ENCODE measurements at regions of chr3 and their contacts with region 1.

Region 1: DNA sequence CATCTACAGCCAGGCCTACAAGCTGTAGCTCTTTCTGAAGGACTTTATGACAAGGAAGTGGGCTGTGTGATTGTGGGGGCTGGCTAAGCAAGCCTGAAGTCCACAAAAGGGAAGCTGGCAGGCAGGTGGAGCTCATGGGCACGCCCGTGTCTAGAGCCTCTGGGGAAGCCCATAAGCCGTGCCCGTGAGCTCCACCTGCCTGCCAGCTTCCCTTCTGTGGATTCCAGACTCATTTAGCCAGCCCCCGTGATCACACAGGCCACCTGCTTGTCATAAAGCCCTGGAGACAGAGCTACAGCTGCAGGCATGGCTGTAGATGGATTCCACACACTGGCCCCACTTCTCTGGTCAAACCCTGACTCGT is 15.2 kb downstream of the EFCC1 start:
- DNase-seq: peak in 8 of 9 experiments; percentile 48 to 91 (median 74)
- ATAC-seq: peak; percentile 86
- H3K4me3 ChIP-seq: peak overlapping the region; percentile 40 to 41
- H3K4me3 Mint-ChIP-seq: peak overlapping the region; percentile 73
- H3K27ac ChIP-seq: peak overlapping the region; percentile 49 to 87
- H3K27ac Mint-ChIP-seq: peak overlapping the region; percentile 92
- H3K4me1 ChIP-seq: peaks cover 41% of the 10 kb centered on the region
- H3K4me1 Mint-ChIP-seq: peaks cover 44% of the 10 kb centered on the region
- H3K27me3 ChIP-seq: no peaks in the 10 kb centered on the region
- H3K27me3 Mint-ChIP-seq: no peaks in the 10 kb centered on the region
- CTCF ChIP-seq: peak; percentile 38

Region 2: GRCh38 chr3:129003578-129004160 is 12.7 kb before region 1 on chr3:
- CTCF ChIA-PET with region 1: interaction called, 117 read pairs
- POLR2A ChIA-PET with region 1: interaction called, 47 read pairs
- intact Hi-C with region 1: loop called (anchors 1 kb)
- DNase-seq: peak in 8 of 9 experiments; percentile 38 to 82 (median 60)
- ATAC-seq: peak; percentile 92
- H3K4me3 ChIP-seq: peak overlapping the region in 1 of 2 experiments; percentile 12
- H3K4me3 Mint-ChIP-seq: peak overlapping the region; percentile 70
- H3K27ac ChIP-seq: no peak overlapping the region
- H3K27ac Mint-ChIP-seq: no peak overlapping the region
- H3K4me1 ChIP-seq: peaks cover 43% of the 10 kb centered on the region
- H3K4me1 Mint-ChIP-seq: peaks cover 43% of the 10 kb centered on the region
- H3K27me3 ChIP-seq: peaks cover 5 to 23% of the 10 kb centered on the region in 2 experiments
- H3K27me3 Mint-ChIP-seq: peaks cover 21% of the 10 kb centered on the region
- CTCF ChIP-seq: peak; percentile 34

Region 3: DNA sequence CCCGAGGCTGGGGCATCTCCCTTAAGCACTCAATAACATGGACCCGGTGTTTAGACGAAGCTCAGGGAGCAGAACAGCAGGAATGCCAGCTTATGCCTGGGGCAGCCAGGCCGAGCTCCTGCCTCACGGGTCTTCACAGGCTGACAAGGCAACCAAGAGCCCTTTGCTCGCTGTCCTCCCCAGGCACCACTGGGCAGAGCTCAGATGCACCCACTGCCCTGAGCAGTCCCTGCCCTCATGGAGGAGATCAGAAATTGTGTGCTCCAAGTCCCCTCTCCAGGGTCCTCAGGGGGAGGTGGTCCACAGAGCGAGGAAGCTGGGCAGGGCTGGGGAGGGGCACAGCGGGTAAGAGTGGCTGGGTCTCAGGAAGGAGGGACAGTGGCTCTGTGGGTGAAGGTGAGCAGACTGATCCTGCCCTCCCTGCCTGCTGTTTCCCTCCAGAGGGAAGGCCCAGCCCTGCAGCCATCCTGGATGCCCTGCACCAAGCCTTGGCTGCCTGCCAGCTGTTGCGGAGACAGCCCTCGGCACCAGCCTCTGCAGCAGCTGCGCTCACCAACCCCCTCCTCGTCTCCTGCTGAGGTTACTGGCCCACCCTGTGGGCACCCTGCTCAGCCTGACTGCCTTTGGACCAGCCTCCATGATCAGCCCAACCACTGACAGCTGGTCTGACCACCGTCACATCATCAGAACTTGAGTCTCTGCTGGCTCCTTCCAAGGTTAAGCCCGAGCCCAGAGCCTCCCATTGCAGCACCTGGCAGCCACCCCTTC is 23.1 kb after region 1 on chr3:
- CTCF ChIA-PET with region 1: interaction called, 18 read pairs
- POLR2A ChIA-PET with region 1: interaction called, 3 read pairs
- intact Hi-C with region 1: no loop called
- DNase-seq: peak in 1 of 9 experiments; percentile 45
- ATAC-seq: no peak
- H3K4me3 ChIP-seq: no peak overlapping the region
- H3K4me3 Mint-ChIP-seq: no peak overlapping the region
- H3K27ac ChIP-seq: no peak overlapping the region
- H3K27ac Mint-ChIP-seq: no peak overlapping the region
- H3K4me1 ChIP-seq: peaks cover 23% of the 10 kb centered on the region
- H3K4me1 Mint-ChIP-seq: peaks cover 21% of the 10 kb centered on the region
- H3K27me3 ChIP-seq: peaks cover 0 to 4% of the 10 kb centered on the region in 2 experiments
- H3K27me3 Mint-ChIP-seq: peaks cover 13% of the 10 kb centered on the region
- CTCF ChIP-seq: no peak

Region 4: DNA sequence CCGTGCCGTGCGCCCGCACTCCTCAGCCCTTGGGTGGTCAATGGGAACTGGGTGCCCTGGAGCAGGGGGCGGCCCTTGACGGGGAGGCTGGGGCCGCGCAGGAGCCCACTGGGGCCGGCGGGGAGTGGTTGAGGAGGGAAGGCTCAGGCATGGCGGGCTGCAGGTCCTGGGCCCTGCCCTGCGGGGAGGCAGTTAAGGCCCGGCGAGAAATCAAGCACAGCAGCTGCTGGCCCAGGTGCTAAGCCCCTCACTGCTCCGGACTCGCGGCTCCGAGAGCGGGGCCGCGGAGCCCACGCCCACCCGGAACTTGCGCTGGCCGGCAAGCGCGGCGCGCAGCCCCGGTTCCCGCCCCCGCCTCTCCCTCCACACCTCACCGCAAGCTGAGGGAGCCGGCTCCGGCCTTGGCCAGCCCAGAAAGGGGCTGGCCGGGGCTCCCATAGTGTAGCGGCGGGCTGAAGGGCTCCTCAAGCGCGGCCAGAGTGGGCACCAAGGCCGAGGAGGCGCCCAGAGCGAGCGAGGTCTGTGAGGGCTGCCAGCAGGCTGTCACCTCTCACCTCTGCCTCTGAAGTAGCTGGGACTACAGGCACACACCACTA is 52.1 kb after region 1 on chr3:
- CTCF ChIA-PET with region 1: no interaction called
- POLR2A ChIA-PET with region 1: interaction called, 4 read pairs
- intact Hi-C with region 1: loop called in 1 of 2 experiments (anchors 5 kb)
- DNase-seq: peak in 3 of 9 experiments; percentile 25 to 55 (median 38)
- ATAC-seq: peak; percentile 53
- H3K4me3 ChIP-seq: peak overlapping the region; percentile 33 to 37
- H3K4me3 Mint-ChIP-seq: peak overlapping the region; percentile 82
- H3K27ac ChIP-seq: no peak overlapping the region
- H3K27ac Mint-ChIP-seq: no peak overlapping the region
- H3K4me1 ChIP-seq: no peaks in the 10 kb centered on the region
- H3K4me1 Mint-ChIP-seq: peaks cover 28% of the 10 kb centered on the region
- H3K27me3 ChIP-seq: no peaks in the 10 kb centered on the region
- H3K27me3 Mint-ChIP-seq: peaks cover 3% of the 10 kb centered on the region
- CTCF ChIP-seq: no peak

Region 5: GRCh38 chr3:129197321-129197720 is 181.0 kb after region 1 on chr3:
- CTCF ChIA-PET with region 1: no interaction called
- POLR2A ChIA-PET with region 1: no interaction called
- intact Hi-C with region 1: no loop called
- DNase-seq: no peak
- ATAC-seq: no peak
- H3K4me3 ChIP-seq: no peak overlapping the region
- H3K4me3 Mint-ChIP-seq: no peak overlapping the region
- H3K27ac ChIP-seq: no peak overlapping the region
- H3K27ac Mint-ChIP-seq: no peak overlapping the region
- H3K4me1 ChIP-seq: no peaks in the 10 kb centered on the region
- H3K4me1 Mint-ChIP-seq: no peaks in the 10 kb centered on the region
- H3K27me3 ChIP-seq: no peaks in the 10 kb centered on the region
- H3K27me3 Mint-ChIP-seq: no peaks in the 10 kb centered on the region
- CTCF ChIP-seq: no peak

Region 6: GRCh38 chr3:129291236-129291886 is 275.0 kb after region 1 on chr3:
- CTCF ChIA-PET with region 1: no interaction called
- POLR2A ChIA-PET with region 1: no interaction called
- intact Hi-C with region 1: no loop called
- DNase-seq: no peak
- ATAC-seq: no peak
- H3K4me3 ChIP-seq: no peak overlapping the region
- H3K4me3 Mint-ChIP-seq: no peak overlapping the region
- H3K27ac ChIP-seq: no peak overlapping the region
- H3K27ac Mint-ChIP-seq: no peak overlapping the region
- H3K4me1 ChIP-seq: no peaks in the 10 kb centered on the region
- H3K4me1 Mint-ChIP-seq: peaks cover 11% of the 10 kb centered on the region
- H3K27me3 ChIP-seq: no peaks in the 10 kb centered on the region
- H3K27me3 Mint-ChIP-seq: no peaks in the 10 kb centered on the region
- CTCF ChIP-seq: no peak

Measured in CD8-positive, alpha-beta T cell (primary cell).